PC-3 (cell line): ENCODE measurements at regions of chr11 and their contacts with region 1.

Region 1: DNA sequence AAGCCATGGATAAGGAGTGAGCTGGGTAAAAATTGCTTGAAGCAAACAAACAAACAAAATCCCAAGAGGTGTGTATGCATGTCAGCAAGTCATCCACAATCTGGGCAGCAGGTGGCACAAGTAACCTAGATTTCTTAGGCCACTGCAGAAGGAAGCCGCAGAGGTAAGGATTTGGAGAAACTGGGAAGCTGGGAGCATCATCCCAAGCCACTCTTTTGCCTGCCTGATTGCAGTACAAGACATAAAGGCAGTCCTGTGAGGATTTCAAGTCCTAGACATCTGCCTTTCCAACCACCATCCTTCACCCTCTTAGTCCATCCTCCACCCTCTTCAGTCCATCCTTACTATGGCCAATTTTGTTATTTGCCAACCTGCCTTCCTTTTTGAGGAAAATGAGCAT is 67.2 kb upstream of the BMAL1 start:
- DNase-seq: peak; percentile 82
- ATAC-seq: peak; percentile 78
- H3K4me3 ChIP-seq: no peak overlapping the region
- H3K27ac ChIP-seq: no peak overlapping the region
- H3K4me1 ChIP-seq: peaks cover 37% of the 10 kb centered on the region
- H3K27me3 ChIP-seq: no peaks in the 10 kb centered on the region
- CTCF ChIP-seq: peak; percentile 87

Region 2: DNA sequence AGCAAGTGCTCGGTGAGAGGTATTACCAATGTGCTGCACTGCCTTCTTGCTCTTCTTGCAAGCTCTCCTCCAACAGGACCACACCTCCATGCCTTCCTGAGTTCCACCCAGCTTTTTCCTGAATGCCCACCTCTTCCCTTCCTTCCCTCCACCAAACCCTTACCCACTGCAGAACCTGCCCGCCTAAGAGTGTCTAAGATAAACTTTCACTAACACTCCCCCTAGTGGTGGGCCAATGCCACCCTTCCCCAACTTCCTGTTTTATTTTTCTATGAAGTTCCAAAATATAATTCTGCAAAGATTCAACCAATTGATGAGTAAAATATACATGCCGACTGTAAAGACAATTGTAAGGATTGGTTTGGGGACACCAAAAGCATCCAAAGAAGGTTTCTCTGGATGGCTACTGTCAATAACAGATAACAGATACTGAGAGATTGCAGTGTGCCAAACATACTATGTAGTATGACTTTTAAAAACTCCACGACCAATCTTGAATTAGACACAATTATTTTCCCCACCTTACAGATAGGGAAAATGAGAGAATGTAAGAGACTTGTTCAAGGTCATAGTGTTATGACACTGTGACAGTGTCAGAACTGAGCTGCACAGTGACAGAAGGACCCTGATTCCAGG is 28.6 kb after region 1 on chr11:
- CTCF ChIA-PET with region 1: interaction called, 5 read pairs
- POLR2A ChIA-PET with region 1: no interaction called
- intact Hi-C with region 1: loop called (anchors 1 kb)
- DNase-seq: peak; percentile 70
- ATAC-seq: peak; percentile 78
- H3K4me3 ChIP-seq: no peak overlapping the region
- H3K27ac ChIP-seq: no peak overlapping the region
- H3K4me1 ChIP-seq: peaks cover 12% of the 10 kb centered on the region
- H3K27me3 ChIP-seq: no peaks in the 10 kb centered on the region
- CTCF ChIP-seq: peak; percentile 94

Region 3: DNA sequence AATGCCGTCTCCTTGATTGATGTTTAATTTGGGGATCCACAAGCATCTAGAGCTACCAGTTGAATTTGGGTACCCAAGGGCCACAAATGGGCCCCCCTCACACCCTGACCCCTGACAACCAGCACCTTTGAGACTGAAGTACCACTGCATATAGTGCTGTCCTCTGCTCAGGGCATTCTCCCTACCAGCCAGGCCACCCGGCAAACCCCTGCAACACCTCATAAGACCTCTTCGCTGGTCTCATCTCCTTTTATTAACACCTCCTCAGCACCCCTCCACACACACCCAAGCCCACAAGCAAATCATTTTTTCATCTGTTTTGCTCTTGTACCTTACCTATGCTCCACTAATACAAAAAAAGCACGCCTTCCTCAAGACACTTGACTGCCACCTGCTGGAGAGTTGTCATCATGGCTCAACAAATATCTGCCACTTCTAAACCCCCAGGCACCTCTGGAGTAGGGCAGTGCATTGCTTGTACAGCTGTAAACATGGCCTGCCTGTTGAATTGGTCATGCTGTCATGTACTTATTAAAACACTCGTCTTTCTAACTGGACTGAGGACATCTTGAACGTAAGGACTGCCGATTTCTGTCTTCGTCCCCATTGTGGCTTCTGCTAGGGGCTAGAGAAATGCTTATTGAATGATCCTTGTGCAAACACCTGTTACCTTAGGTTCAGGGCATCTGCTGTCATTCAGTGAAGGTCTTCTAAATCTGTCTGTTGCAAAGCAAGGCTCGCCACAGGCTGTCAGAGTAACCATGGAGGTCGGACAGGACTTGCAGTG is 133.7 kb after region 1 on chr11:
- CTCF ChIA-PET with region 1: interaction called, 14 read pairs
- POLR2A ChIA-PET with region 1: no interaction called
- intact Hi-C with region 1: loop called (anchors 1 kb)
- DNase-seq: peak; percentile 88
- ATAC-seq: peak; percentile 35
- H3K4me3 ChIP-seq: no peak overlapping the region
- H3K27ac ChIP-seq: no peak overlapping the region
- H3K4me1 ChIP-seq: peaks cover 15% of the 10 kb centered on the region
- H3K27me3 ChIP-seq: no peaks in the 10 kb centered on the region
- CTCF ChIP-seq: peak; percentile 89

Region 4: GRCh38 chr11:13384908-13385640 is 174.7 kb after region 1 on chr11:
- CTCF ChIA-PET with region 1: interaction called, 10 read pairs
- POLR2A ChIA-PET with region 1: no interaction called
- intact Hi-C with region 1: no loop called
- DNase-seq: peak; percentile 52
- ATAC-seq: peak; percentile 60
- H3K4me3 ChIP-seq: no peak overlapping the region
- H3K27ac ChIP-seq: no peak overlapping the region
- H3K4me1 ChIP-seq: no peaks in the 10 kb centered on the region
- H3K27me3 ChIP-seq: no peaks in the 10 kb centered on the region
- CTCF ChIP-seq: peak; percentile 78